ENCODE measurements at regions of chr17 and their contacts with region 1.

Region 1: GRCh38 chr17:36601303-36602029 is at the start of gene MRM1:
- DNase-seq: peak; percentile 92 to 99 (median 96)

Region 2: GRCh38 chr17:35870906-35871819 is 730.3 kb before region 1 on chr17:
- intact Hi-C with region 1: no loop called
- DNase-seq: no peak

Region 3: GRCh38 chr17:36486204-36487194 is 115.0 kb before region 1 on chr17 and contains the start of gene ZNHIT3:
- intact Hi-C with region 1: loop called (anchors 2 kb)
- DNase-seq: peak; percentile 84 to 99 (median 92)

Region 4: DNA sequence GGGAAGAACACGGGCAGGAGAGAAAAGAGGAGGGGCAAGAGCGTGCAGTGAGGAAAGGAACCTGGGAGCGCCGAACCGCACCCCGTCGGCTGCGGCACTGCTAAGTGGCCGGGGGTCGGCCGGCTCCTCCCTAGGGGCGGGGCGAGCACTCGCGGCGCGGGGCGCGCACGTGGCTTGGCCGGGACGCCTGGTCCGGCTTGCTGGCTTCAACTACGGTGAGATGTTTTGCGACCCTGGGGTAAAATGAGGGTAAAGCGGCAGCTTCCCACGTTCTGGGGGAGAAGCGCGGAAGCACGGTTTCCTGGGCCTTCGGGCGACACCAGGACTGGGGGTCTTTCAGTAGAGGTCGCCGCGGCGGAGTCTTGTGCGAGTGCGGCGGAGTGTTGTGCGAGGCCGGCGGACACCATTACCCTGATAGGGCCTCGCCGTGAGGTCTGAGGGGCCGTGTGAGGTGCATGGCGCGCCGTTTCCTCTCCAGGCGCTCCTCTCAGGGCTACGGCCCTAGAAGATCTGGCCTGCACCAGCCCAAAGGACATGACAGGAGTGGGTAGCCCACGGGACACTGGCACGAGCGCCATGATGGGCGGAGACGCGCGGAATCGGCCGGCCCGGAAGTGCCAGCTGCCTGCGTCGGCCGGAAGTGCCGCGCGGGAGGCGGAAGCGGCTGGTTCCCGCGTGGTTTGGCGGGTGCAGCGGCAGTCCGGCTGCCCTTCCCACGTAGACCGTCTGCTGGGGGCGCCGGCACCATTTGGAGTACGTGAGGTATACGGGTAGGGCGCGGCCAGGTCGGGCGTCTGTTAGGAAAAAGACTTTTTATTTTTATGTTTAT is 66.4 kb before region 1 on chr17 and contains the starts of genes MYO19 and PIGW:
- intact Hi-C with region 1: loop called (anchors 2 kb)
- DNase-seq: peak; percentile 76 to 97 (median 86)

Region 5: DNA sequence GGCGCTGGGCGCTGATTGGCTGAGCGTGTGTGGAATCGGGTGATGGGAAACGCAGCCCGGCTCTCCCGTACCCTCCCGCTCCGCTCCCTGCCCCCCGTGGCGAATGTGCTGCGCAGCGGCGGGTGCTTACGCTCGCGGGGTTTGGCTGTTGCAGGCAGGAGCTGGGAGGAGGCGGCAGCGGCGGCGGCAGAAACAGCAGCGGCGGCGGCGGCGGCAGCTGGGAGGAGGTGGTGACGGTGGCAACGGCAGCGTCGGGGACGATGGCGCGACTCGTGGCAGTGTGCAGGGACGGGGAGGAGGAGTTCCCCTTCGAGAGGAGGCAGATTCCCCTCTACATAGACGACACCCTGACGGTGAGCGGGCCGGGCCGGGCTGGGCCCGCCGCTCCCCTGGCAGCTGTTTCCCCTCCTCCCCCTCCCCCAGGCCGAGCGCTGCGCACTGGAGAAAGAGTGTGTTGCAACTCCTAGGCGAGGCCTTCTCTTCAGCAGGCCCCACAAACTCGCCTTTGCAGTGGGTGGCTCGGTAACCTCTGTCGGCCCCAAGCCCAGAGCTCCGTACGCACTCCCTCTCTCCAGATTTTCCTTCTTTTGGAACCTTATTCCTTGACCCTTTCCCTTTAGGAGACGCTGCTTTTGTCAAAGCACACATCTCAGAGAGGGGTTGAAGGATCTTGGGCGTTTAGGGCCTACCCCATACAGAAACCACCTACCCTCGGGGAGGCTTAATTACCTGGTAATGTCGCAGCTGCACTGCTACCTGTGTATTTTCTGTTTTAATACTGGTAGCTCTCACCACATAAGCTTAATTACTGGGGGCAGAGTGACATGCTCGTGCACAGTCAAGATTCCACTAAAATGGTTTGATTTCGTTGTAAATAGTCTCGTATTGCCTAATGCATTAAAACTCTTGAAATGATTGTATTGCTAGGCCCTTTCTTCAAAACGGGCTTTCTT is 55.7 kb before region 1 on chr17:
- intact Hi-C with region 1: loop called (anchors 5 kb)
- DNase-seq: peak in 9 of 10 donors; percentile 95 to 100 (median 96)

Region 6: GRCh38 chr17:36892112-36892838 is 290.8 kb after region 1 on chr17:
- intact Hi-C with region 1: no loop called
- DNase-seq: peak in 1 of 10 donors; percentile 45

Region 7: DNA sequence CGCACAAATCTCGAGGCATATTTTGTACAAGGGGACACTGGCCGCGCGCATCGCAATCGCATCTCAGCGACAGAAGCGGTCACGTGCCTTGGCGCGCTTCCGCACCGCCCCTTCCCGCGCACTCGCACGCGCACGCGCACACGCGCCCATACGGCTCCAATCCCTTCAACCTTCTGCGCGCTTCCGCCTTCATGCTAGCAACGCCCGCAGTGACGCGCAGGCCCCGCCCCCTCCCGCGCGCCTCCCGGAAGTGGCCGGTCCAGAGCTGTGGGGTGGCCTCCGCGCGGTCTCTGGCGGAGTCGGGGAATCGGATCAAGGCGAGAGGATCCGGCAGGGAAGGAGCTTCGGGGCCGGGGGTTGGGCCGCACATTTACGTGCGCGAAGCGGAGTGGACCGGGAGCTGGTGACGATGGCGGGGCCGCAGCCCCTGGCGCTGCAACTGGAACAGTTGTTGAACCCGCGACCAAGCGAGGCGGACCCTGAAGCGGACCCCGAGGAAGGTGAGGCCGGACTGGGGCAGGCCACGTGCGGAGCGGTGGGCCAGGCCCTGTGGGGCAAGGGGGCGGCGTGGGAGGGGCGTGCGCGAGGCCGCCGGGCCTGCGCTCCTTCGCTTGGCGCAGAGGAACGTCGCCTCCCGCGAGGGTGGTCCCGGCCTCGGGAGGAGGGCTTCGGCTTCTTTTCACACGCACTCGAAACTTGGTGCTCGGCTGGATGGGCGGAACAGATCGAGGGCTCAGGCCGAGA is 347.4 kb after region 1 on chr17 and contains the start of gene AATF:
- intact Hi-C with region 1: loop called (anchors 10 kb)
- DNase-seq: peak; percentile 92 to 99 (median 96)

Measured in posterior cingulate gyrus (tissue), 11 donors.